ENCODE measurements at regions of chr14 and their contacts with region 1.

Region 1: DNA sequence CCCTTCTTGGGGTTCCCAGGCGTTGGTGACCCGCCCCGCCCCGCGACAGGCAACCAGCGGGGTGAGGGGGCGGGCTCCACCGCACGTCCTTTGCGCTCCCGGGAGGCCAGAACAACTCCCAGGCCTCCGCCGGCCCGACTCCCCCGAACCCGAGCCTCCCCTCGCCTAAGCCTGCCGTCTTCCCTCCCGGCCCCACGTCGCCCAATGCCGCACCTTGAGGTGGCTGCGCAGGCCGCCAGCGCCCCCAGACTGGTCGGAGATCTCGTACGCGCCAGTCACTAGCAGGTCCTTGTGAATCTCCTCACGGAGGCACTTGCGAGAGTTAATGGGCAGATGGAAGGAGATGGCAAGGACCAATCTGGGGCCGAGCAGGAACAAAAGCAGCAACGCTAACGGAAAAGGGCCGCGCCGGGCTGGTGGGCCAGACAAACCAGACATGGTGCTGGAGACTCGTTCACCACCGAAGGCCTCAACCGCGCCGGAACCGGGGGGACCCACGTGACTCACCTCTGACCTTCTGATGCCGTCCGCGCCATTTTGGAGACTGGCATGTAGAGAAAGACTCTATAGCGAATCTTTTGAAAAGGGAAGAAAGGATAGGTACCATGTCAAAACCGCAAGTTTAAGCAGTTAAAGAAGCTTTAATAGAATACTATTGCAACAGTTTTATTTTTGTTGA is at the start of gene TMED10:
- DNase-seq: peak; percentile 83 to 94 (median 88)
- H3K4me3 ChIP-seq: peak within 1 kb of the TSS; percentile 64 to 100 (median 94)
- H3K27ac ChIP-seq: peak within 1 kb of the TSS; percentile 88 to 100 (median 98)
- H3K27me3 ChIP-seq: no peaks in the 10 kb centered on the region
- CTCF ChIP-seq: peak in 44 of 56 donors; percentile 4 to 66 (median 34)
- total RNA-seq, gene TMED10: 120 to 287 (median 172) TPM

Region 2: GRCh38 chr14:75132382-75133086 is 43.7 kb before region 1 on chr14:
- intact Hi-C with region 1: loop called (anchors 5 kb)
- DNase-seq: peak in 2 of 10 donors; percentile 44 to 59
- H3K4me3 ChIP-seq: peak overlapping the region in 1 of 59 donors; percentile 1
- H3K27ac ChIP-seq: peak overlapping the region in 56 of 59 donors; percentile 3 to 86 (median 67)
- H3K27me3 ChIP-seq: no peaks in the 10 kb centered on the region
- CTCF ChIP-seq: peak; percentile 62 to 94 (median 86)

Region 3: GRCh38 chr14:75147423-75148071 is 28.7 kb before region 1 on chr14:
- intact Hi-C with region 1: loop called in 1 of 2 experiments (anchors 2 kb)
- DNase-seq: peak in 9 of 10 donors; percentile 56 to 90 (median 78)
- H3K4me3 ChIP-seq: peak overlapping the region in 47 of 59 donors; percentile 3 to 54 (median 26)
- H3K27ac ChIP-seq: peak overlapping the region; percentile 90 to 100 (median 99)
- H3K27me3 ChIP-seq: no peaks in the 10 kb centered on the region
- CTCF ChIP-seq: peak in 55 of 56 donors; percentile 16 to 70 (median 57)

Region 4: GRCh38 chr14:75258615-75259466 is 82.6 kb after region 1 on chr14:
- intact Hi-C with region 1: loop called (anchors 2 to 5 kb)
- DNase-seq: peak; percentile 97 to 99 (median 98)
- H3K4me3 ChIP-seq: peak overlapping the region; percentile 35 to 78 (median 60)
- H3K27ac ChIP-seq: peak overlapping the region; percentile 68 to 100 (median 96)
- H3K27me3 ChIP-seq: no peaks in the 10 kb centered on the region
- CTCF ChIP-seq: peak in 7 of 56 donors; percentile 5 to 23 (median 17)

Region 5: DNA sequence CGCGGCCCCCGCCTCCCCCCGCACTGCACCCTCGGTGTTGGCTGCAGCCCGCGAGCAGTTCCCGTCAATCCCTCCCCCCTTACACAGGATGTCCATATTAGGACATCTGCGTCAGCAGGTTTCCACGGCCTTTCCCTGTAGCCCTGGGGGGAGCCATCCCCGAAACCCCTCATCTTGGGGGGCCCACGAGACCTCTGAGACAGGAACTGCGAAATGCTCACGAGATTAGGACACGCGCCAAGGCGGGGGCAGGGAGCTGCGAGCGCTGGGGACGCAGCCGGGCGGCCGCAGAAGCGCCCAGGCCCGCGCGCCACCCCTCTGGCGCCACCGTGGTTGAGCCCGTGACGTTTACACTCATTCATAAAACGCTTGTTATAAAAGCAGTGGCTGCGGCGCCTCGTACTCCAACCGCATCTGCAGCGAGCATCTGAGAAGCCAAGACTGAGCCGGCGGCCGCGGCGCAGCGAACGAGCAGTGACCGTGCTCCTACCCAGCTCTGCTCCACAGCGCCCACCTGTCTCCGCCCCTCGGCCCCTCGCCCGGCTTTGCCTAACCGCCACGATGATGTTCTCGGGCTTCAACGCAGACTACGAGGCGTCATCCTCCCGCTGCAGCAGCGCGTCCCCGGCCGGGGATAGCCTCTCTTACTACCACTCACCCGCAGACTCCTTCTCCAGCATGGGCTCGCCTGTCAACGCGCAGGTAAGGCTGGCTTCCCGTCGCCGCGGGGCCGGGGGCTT is 102.3 kb after region 1 on chr14 and contains the start of gene FOS:
- intact Hi-C with region 1: loop called (anchors 5 kb)
- DNase-seq: peak; percentile 82 to 96 (median 94)
- H3K4me3 ChIP-seq: peak within 1 kb of the TSS; percentile 63 to 97 (median 85)
- H3K27ac ChIP-seq: peak within 1 kb of the TSS; percentile 77 to 100 (median 99)
- H3K27me3 ChIP-seq: no peaks in the 10 kb centered on the region
- CTCF ChIP-seq: peak in 4 of 56 donors; percentile 5 to 23 (median 16)
- total RNA-seq, gene FOS: 7.4 to 738 (median 68.8) TPM

Region 6: DNA sequence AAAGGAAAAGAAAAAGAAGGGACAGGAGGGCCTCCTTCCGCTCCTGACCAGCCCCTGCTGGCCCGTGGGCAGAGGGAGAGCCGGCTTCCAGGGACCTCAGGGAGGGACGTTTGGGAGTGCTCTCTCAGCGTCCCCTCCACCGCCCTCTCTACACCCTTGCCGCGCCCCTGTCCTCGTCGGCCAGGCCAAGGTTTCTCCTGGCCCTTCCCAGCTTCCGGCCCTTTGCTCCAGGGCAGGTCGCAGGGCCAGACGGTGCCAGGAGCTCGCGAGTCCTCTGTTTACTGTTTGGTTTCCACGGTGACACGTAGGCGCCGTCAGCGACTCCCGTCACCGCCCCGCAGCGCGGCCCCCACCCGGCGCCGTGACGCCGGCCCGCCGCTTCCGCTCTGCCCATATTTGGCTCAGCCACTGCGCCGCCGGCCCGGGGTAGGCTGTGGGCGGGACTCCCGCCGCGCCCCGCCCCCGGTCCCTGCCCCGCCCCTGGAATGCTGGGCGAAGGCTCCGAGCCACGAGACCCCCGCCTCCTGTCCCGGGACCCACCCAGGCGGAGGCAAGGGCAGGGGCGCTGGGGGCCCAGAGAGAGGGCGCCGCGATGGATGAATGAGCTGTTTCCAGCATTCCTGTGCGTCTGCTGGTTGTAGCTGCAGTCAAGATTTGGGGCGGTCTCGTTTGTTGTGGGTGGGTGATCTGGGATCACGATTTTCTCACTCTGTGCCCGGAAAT is 117.8 kb after region 1 on chr14:
- intact Hi-C with region 1: loop called (anchors 2 to 5 kb)
- DNase-seq: peak; percentile 84 to 98 (median 92)
- H3K4me3 ChIP-seq: peak overlapping the region; percentile 57 to 94 (median 77)
- H3K27ac ChIP-seq: peak overlapping the region; percentile 57 to 99 (median 93)
- H3K27me3 ChIP-seq: no peaks in the 10 kb centered on the region
- CTCF ChIP-seq: peak in 16 of 56 donors; percentile 1 to 29 (median 16)

Region 7: DNA sequence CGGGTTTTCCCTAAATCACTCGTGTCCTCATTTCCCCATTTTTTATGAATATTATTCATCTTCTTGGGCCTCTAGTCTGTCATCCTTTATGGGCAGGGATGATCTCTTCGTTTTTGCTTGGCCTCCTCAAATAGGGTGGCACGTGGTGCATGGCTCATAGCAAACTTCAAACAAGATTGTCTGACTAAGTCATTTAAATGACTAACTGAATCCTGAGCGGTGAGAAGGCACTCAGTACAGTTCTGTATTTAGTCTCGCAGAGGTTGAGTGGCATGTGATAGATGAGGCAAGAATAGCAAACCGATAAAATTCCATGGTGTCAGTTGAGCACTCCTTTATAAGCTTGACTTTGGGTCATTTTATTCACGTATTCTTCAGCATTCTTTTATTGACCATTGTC is 245.9 kb after region 1 on chr14:
- intact Hi-C with region 1: loop called in 1 of 2 experiments (anchors 5 kb)
- DNase-seq: no peak
- H3K4me3 ChIP-seq: no peak overlapping the region
- H3K27ac ChIP-seq: no peak overlapping the region
- H3K27me3 ChIP-seq: no peaks in the 10 kb centered on the region
- CTCF ChIP-seq: no peak